ENCODE measurements at regions of chr11 and their contacts with region 1.

Region 1: GRCh38 chr11:70416881-70417280 is 18.6 kb downstream of the CTTN start:
- DNase-seq: no peak
- ATAC-seq: no peak
- H3K4me3 ChIP-seq: no peak overlapping the region
- H3K27ac ChIP-seq: no peak overlapping the region
- H3K4me1 ChIP-seq: no peaks in the 10 kb centered on the region
- H3K27me3 ChIP-seq: no peaks in the 10 kb centered on the region
- CTCF ChIP-seq: no peak

Region 2: GRCh38 chr11:69563946-69564775 is 852.7 kb before region 1 on chr11:
- CTCF ChIA-PET with region 1: no interaction called
- POLR2A ChIA-PET with region 1: no interaction called
- intact Hi-C with region 1: no loop called
- DNase-seq: no peak
- ATAC-seq: no peak
- H3K4me3 ChIP-seq: no peak overlapping the region
- H3K27ac ChIP-seq: no peak overlapping the region
- H3K4me1 ChIP-seq: no peaks in the 10 kb centered on the region
- H3K27me3 ChIP-seq: no peaks in the 10 kb centered on the region
- CTCF ChIP-seq: no peak

Region 3: DNA sequence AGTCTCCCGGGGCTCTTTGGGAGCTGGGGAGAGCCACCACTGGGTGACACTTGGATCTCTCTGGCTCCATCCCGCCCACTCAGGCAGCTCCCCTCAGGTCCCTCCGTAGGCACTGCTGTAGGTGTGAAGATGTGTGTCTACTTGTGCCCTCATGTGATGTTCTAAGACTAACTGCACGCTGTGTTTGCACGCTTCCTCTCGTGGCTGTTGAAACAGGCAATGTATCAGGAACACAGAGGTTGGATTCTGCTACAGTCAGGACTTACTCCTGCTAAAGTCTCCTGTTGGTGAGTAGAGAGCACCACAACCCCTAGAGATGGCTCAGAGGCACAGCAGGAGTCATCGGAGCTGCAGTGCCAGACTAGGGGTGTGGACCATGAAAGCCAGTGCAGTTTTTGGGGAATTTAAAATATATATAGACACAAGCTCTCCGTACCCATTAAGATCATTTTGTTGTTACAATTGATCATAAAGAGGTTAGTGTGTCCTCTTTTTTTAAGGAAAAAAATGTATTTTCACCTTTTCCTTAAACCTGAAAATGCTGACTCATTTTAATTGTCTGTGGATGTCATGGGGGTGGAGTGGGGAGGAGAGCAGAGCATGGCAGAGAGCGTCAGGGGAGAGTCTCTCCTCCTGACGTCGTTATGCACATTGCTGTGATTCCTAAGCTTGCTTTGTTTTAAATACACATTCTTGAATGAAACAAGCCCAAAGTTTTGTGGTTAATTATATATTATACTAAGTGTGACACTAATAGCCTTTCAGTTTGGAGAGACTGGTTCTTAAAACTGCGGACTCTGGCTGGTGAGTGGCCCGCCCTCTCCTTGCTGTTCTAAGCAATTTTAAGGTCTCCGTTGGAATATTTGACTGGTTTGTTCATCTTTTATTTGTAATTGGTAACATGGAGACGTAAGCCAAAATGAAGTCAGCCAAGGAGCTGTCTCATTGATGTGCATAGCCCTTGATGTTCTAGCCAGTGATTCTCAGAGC is 34.7 kb before region 1 on chr11:
- CTCF ChIA-PET with region 1: no interaction called
- POLR2A ChIA-PET with region 1: no interaction called
- intact Hi-C with region 1: no loop called
- DNase-seq: no peak
- ATAC-seq: peak; percentile 67
- H3K4me3 ChIP-seq: no peak overlapping the region
- H3K27ac ChIP-seq: no peak overlapping the region
- H3K4me1 ChIP-seq: no peaks in the 10 kb centered on the region
- H3K27me3 ChIP-seq: no peaks in the 10 kb centered on the region
- CTCF ChIP-seq: no peak

Region 4: DNA sequence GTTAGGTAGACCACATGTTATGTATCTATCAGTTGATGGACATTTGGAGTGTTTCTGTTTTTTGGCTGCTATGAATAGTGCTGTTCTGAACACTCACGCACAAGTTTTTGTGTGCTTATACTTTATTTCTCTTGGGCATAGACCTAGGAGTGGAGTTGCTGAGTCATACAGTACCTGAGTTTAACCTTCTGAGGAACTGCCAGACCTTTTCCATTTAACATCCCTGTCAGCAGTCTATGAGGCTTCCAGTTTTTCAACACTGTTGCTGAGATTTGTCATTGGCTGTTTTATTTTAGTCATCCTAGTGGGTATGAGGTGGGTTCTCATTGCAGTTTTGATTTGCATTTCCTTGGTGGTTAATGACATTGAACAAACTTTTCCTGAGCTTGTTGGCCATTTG is 14.2 kb before region 1 on chr11:
- CTCF ChIA-PET with region 1: no interaction called
- POLR2A ChIA-PET with region 1: no interaction called
- intact Hi-C with region 1: loop called (anchors 1 kb)
- DNase-seq: peak; percentile 10
- ATAC-seq: no peak
- H3K4me3 ChIP-seq: no peak overlapping the region
- H3K27ac ChIP-seq: no peak overlapping the region
- H3K4me1 ChIP-seq: peaks cover 21% of the 10 kb centered on the region
- H3K27me3 ChIP-seq: no peaks in the 10 kb centered on the region
- CTCF ChIP-seq: no peak

Region 5: GRCh38 chr11:70437111-70437784 is 20.4 kb after region 1 on chr11:
- CTCF ChIA-PET with region 1: no interaction called
- POLR2A ChIA-PET with region 1: no interaction called
- intact Hi-C with region 1: no loop called
- DNase-seq: no peak
- ATAC-seq: no peak
- H3K4me3 ChIP-seq: no peak overlapping the region
- H3K27ac ChIP-seq: no peak overlapping the region
- H3K4me1 ChIP-seq: no peaks in the 10 kb centered on the region
- H3K27me3 ChIP-seq: no peaks in the 10 kb centered on the region
- CTCF ChIP-seq: no peak